ENCODE measurements at regions of chr7 and their contacts with region 1.

Region 1: DNA sequence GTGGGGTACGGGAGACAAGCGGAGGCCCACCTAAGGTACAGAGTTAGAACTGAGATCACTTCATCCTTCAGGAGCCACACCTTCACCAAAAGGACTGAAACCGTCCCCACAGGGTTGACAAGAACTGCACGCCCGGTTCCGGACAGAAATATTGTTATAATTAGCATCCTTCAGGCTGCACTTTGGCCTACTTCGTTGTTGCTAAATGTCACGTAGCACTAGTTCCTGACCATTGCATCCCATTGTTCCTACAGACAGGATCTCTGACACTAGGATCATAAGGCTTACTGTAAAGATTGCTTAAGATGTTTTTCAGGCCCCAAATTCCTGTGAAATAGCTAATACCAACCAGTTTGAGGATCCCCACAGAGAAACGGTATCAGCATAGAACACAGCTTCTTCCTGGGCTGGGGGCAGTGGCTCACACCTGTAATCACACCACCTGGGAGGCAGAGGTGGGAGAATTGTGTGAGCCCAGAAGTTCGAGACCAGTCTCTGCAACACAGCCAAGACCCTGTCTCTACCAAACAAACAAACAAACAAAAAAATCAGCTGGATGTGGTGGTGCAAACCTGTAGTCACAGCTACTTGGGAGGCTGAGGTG is 18.3 kb upstream of the EIF4H start:
- DNase-seq: no peak
- ATAC-seq: peak in 1 of 8 donors; percentile 83
- H3K4me3 ChIP-seq: no peak overlapping the region
- H3K27ac ChIP-seq: peak overlapping the region in 1 of 10 donors; percentile 6
- H3K4me1 ChIP-seq: peaks cover 0 to 8% (median 0%) of the 10 kb centered on the region in 9 donors
- H3K27me3 ChIP-seq: no peaks in the 10 kb centered on the region
- CTCF ChIP-seq: no peak

Region 2: DNA sequence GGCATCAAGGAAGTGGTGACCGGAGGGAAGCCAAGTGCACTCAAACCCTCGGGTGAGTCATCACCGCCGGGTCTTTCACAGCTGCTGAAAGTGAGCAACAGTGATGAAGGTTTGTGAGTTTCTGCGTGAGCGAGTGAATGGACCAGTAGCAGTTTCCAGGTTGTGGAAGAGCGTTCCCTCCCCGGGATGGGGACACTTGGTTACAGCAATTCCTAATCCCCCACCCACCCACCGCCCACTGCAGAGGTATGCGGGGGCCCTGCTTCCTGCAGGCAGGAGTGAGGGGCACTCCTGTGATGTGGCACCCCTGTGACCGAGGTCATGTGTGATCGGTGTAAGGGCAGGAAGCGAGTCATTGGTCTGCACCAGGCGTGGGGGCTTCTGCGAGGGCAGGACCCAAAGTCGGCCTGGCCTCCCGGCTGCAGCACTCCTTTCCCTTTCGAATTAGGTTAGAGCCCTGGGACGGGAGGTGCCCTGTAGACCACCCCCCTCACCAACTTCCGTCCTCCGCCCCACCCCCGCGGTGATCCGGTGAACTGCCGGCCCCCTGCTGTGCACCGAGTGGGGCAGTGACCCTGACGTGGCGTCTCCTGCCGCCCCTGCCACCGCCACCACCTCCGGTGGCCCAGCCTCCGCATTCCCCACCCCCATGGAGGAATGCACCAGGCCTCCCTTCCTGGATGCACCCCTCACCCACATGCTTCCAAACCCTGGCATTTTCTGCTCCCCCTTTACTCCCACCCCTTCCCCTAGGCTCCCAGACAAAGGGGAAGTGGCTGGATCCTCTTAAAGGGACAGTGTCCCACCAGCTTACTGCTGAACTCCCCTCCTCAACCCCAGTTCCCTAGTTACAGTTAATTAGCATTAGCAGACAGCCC is 61.4 kb before region 1 on chr7:
- intact Hi-C with region 1: loop called in 1 of 10 experiments (anchors 5 kb)
- DNase-seq: peak; percentile 44 to 66
- ATAC-seq: peak; percentile 50 to 81 (median 70)
- H3K4me3 ChIP-seq: peak overlapping the region in 9 of 10 donors; percentile 31 to 63 (median 54)
- H3K27ac ChIP-seq: peak overlapping the region in 9 of 10 donors; percentile 17 to 92 (median 74)
- H3K4me1 ChIP-seq: peaks cover 10 to 38% (median 30%) of the 10 kb centered on the region in 9 donors
- H3K27me3 ChIP-seq: no peaks in the 10 kb centered on the region
- CTCF ChIP-seq: no peak